Panc1 (cell line): ENCODE measurements at regions of chr2 and their contacts with region 1.

Region 1: GRCh38 chr2:148644883-148645538 is 460 bp downstream of the EPC2 start:
- DNase-seq: peak; percentile 83
- ATAC-seq: peak; percentile 84
- H3K4me3 ChIP-seq: peak overlapping the region; percentile 87 to 95
- H3K27ac ChIP-seq: peak overlapping the region; percentile 80
- H3K4me1 ChIP-seq: peaks cover 13% of the 10 kb centered on the region
- H3K27me3 ChIP-seq: peaks cover 10% of the 10 kb centered on the region
- CTCF ChIP-seq: peak; percentile 47

Region 2: GRCh38 chr2:148501545-148501944 is 143.5 kb before region 1 on chr2:
- CTCF ChIA-PET with region 1: no interaction called
- POLR2A ChIA-PET with region 1: no interaction called
- in situ Hi-C with region 1: no loop called
- intact Hi-C with region 1: no loop called
- DNase-seq: no peak
- ATAC-seq: no peak
- H3K4me3 ChIP-seq: no peak overlapping the region
- H3K27ac ChIP-seq: no peak overlapping the region
- H3K4me1 ChIP-seq: no peaks in the 10 kb centered on the region
- H3K27me3 ChIP-seq: no peaks in the 10 kb centered on the region; the same call in 1 of the 2 replicates
- CTCF ChIP-seq: no peak

Region 3: DNA sequence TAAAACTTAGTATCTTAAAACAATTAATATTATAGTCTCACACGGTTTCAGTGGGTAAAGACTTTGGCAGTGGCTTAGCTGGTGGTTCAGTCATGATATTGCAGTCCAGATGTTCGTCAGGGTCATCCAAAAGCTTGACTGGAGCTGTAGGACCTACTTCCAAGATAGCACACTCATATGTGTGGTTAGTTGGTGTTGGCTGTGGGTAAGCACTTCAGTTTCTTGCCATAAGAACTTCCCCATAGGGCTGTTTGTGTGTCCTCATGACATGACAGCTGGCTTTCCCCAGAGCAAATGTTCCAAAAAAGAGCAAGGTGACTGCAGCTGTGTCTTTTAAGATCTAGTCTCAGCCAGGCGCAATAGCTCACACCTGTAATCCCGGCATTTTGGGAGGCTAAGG is 49.0 kb before region 1 on chr2:
- CTCF ChIA-PET with region 1: interaction called, 14 read pairs
- POLR2A ChIA-PET with region 1: no interaction called
- in situ Hi-C with region 1: no loop called
- intact Hi-C with region 1: no loop called
- DNase-seq: no peak
- ATAC-seq: no peak
- H3K4me3 ChIP-seq: no peak overlapping the region
- H3K27ac ChIP-seq: no peak overlapping the region
- H3K4me1 ChIP-seq: no peaks in the 10 kb centered on the region
- H3K27me3 ChIP-seq: peaks cover 4% of the 10 kb centered on the region
- CTCF ChIP-seq: no peak

Region 4: GRCh38 chr2:148674063-148675020 is 29.3 kb after region 1 on chr2:
- CTCF ChIA-PET with region 1: interaction called, 11 read pairs
- POLR2A ChIA-PET with region 1: interaction called, 17 read pairs
- in situ Hi-C with region 1: no loop called
- intact Hi-C with region 1: no loop called
- DNase-seq: no peak
- ATAC-seq: no peak
- H3K4me3 ChIP-seq: no peak overlapping the region
- H3K27ac ChIP-seq: no peak overlapping the region
- H3K4me1 ChIP-seq: no peaks in the 10 kb centered on the region
- H3K27me3 ChIP-seq: no peaks in the 10 kb centered on the region
- CTCF ChIP-seq: peak; percentile 71

Region 5: DNA sequence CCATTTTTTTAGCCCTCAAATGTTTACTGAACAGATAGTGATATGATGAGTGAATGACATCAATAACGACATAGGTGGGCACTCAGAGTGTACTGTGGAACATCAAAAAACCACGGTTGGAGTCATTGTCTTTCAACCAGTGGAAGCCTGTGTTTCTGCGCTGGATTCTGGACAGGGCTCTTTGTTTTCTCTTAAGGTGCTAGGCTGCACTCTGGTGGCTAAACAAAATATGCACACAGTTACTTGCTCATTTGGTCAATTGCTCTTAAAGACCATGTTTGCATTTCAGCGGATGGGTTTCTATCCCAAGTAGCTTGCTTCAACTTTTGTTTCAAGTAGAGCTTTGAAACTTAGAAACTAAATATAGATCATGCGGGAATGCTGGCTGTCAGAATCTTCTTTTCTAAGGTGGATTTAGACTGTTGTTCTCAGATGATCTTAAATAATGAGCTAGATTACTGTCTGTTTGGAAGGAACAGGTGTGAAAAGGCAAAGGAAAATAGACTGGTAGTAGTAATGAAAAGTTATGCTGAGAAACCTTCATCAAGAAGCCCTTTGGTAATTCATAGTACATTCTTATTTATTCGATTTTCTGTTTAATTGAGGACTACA is 345.0 kb after region 1 on chr2:
- CTCF ChIA-PET with region 1: no interaction called
- POLR2A ChIA-PET with region 1: no interaction called
- in situ Hi-C with region 1: no loop called
- intact Hi-C with region 1: loop called (anchors 2 kb)
- DNase-seq: peak; percentile 41
- ATAC-seq: peak; percentile 94
- H3K4me3 ChIP-seq: no peak overlapping the region
- H3K27ac ChIP-seq: no peak overlapping the region
- H3K4me1 ChIP-seq: no peaks in the 10 kb centered on the region
- H3K27me3 ChIP-seq: no peaks in the 10 kb centered on the region
- CTCF ChIP-seq: peak; percentile 77

Region 6: DNA sequence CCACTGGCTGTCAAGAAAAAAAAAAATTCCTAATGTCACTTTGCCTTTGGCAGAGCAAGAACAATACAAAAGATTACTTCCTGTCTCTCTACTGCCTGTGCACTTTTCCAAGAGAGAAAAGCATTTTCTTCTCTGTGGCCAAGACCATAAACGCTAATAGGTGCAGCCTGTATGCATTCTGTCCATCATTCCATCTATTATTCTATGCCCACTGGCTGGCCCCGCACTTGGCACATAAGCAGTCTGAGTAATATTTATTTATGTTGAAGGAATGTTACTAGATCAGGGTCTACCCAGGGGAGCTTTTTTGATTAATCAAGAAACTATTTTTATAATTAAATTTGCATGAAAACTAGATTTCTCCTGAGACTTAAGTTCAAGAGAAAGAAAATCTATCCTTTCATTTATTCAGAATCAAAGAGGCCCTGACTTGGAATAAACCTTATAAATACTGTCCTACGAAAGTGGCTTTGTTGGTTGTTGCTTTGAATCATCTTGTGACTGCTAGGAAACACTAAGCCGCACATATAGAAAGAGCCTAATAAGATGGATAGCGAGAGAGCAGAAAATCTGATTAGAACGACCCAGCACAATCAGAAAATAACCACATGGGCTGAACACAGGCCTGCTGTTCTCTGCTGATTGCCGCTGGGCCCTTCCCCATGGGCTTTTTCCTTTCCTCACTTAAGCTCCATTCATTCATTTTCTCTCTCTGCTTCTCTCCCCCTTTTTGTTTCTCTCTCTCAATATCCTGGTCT is 883.2 kb after region 1 on chr2:
- CTCF ChIA-PET with region 1: no interaction called
- POLR2A ChIA-PET with region 1: interaction called, 12 read pairs
- in situ Hi-C with region 1: no loop called
- intact Hi-C with region 1: no loop called
- DNase-seq: no peak
- ATAC-seq: no peak
- H3K4me3 ChIP-seq: no peak overlapping the region
- H3K27ac ChIP-seq: no peak overlapping the region
- H3K4me1 ChIP-seq: no peaks in the 10 kb centered on the region
- H3K27me3 ChIP-seq: no peaks in the 10 kb centered on the region
- CTCF ChIP-seq: no peak